Mammary epithelial cell (primary cell): ENCODE measurements at regions of chr16 and their contacts with region 1.

Region 1: GRCh38 chr16:78122774-78123315 is 23.4 kb downstream of the WWOX start:
- DNase-seq: peak; percentile 57
- H3K4me3 ChIP-seq: peak overlapping the region in 2 of 3 experiments; percentile 32 to 46
- H3K27ac ChIP-seq: peak overlapping the region; percentile 62
- H3K4me1 ChIP-seq: peaks cover 3% of the 10 kb centered on the region
- H3K27me3 ChIP-seq: no peaks in the 10 kb centered on the region
- CTCF ChIP-seq: peak; percentile 18 to 33

Region 2: DNA sequence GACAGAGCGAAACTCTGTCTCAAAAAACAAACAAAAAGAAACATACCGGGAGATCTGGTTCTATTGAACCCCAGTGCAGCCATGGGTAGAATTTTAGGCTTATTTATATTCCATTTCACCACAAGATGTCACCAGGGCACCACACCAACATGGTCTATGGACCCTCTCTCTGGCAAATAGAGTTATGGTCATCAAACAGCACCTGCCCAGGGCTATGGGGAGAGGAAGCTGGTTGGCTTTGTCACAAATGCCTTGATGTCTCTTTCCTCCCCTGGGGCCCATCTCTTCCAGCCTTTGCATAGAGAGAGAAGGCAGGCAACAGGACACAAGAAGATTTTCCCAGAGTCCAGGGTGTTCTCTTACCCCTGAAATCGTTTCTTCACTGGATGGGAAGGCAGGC is 105.0 kb after region 1 on chr16:
- CTCF ChIA-PET with region 1: no interaction called
- dilution Hi-C with region 1: no loop called
- in situ Hi-C with region 1: loop called in 1 of 2 experiments (anchors 5 kb)
- intact Hi-C with region 1: no loop called
- DNase-seq: no peak
- H3K4me3 ChIP-seq: no peak overlapping the region
- H3K27ac ChIP-seq: no peak overlapping the region
- H3K4me1 ChIP-seq: no peaks in the 10 kb centered on the region
- H3K27me3 ChIP-seq: no peaks in the 10 kb centered on the region
- CTCF ChIP-seq: no peak

Region 3: GRCh38 chr16:78235168-78235800 is 112.4 kb after region 1 on chr16:
- CTCF ChIA-PET with region 1: no interaction called
- dilution Hi-C with region 1: no loop called
- in situ Hi-C with region 1: loop called in 1 of 2 experiments (anchors 5 kb)
- intact Hi-C with region 1: loop called (anchors 1 kb)
- DNase-seq: peak; percentile 54
- H3K4me3 ChIP-seq: no peak overlapping the region
- H3K27ac ChIP-seq: no peak overlapping the region
- H3K4me1 ChIP-seq: no peaks in the 10 kb centered on the region
- H3K27me3 ChIP-seq: no peaks in the 10 kb centered on the region
- CTCF ChIP-seq: peak; percentile 95 to 98

Region 4: DNA sequence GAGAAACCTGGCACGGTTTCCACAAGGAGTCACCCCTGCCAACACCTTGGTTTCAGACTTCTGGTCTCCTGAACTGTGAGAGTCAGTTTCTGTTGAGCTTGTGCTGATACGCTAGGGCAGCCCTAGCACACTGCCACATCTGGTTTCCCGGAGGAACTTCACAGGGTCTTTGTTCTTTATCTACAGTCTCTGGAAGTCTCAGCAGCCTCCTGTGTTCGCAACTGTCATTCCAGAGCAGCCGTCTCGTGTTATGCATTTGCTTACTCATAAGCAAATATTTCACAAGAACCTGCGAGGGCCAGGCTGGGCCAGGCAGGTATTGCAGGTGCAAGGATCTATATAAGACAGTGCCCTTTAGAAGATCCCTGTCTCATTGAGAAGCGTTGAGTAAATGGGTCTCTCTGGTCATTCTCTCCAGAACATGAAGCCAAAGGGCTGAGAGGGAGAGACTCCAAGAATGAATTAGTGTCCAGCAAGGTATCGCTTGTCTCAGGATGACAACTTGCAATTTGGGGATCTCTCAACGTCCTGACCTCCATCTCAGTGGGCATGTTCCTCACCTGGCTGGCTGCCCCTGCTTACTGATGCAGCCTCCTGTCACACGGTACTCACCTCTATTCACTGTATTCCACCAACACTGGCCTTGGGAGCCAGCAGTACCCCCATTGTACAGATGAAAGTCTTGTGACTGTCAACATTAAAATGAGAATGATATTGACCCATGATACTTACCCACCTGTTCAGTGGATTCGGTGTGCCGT is 117.8 kb after region 1 on chr16:
- CTCF ChIA-PET with region 1: no interaction called
- dilution Hi-C with region 1: no loop called
- in situ Hi-C with region 1: loop called in 1 of 2 experiments (anchors 5 kb)
- intact Hi-C with region 1: loop called (anchors 1 kb)
- DNase-seq: peak; percentile 23
- H3K4me3 ChIP-seq: no peak overlapping the region
- H3K27ac ChIP-seq: no peak overlapping the region
- H3K4me1 ChIP-seq: no peaks in the 10 kb centered on the region
- H3K27me3 ChIP-seq: no peaks in the 10 kb centered on the region
- CTCF ChIP-seq: no peak

Region 5: GRCh38 chr16:78697426-78697825 is 574.6 kb after region 1 on chr16:
- CTCF ChIA-PET with region 1: no interaction called
- dilution Hi-C with region 1: no loop called
- in situ Hi-C with region 1: no loop called
- intact Hi-C with region 1: loop called (anchors 2 kb)
- DNase-seq: no peak
- H3K4me3 ChIP-seq: no peak overlapping the region
- H3K27ac ChIP-seq: no peak overlapping the region
- H3K4me1 ChIP-seq: no peaks in the 10 kb centered on the region
- H3K27me3 ChIP-seq: no peaks in the 10 kb centered on the region
- CTCF ChIP-seq: no peak

Region 6: GRCh38 chr16:79770244-79771064 is 1647.6 kb after region 1 on chr16:
- CTCF ChIA-PET with region 1: no interaction called
- dilution Hi-C with region 1: no loop called
- in situ Hi-C with region 1: no loop called
- intact Hi-C with region 1: loop called (anchors 5 kb)
- DNase-seq: peak; percentile 88
- H3K4me3 ChIP-seq: peak overlapping the region; percentile 59 to 62 (median 61)
- H3K27ac ChIP-seq: peak overlapping the region; percentile 30
- H3K4me1 ChIP-seq: peaks cover 28% of the 10 kb centered on the region
- H3K27me3 ChIP-seq: no peaks in the 10 kb centered on the region
- CTCF ChIP-seq: peak in 1 of 2 donors; percentile 18